ENCODE measurements at regions of chr14 and their contacts with region 1.

Region 1: DNA sequence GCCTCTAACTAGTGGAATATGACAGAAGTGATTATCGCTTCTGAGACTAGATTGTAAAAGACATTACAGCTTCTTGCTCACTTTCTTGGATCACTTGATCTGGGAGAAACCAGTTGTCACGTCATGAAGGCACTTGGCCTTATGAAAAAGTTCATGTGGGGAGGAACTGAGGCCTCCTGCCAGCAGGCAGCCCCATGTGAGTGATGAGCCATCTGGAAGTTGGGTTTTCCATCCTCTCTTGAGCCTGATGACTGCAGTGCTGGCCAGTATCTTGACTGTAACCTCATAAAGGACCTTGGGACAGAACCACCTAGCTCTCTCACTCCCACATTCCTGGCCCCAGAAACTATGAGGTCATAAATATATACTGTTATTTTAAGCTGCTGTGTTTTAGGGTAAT is 28.0 kb downstream of the TTLL5 start:
- DNase-seq: peak; percentile 65 to 77
- ATAC-seq: peak in 2 of 4 donors; percentile 31 to 52
- H3K4me3 ChIP-seq: no peak overlapping the region
- H3K27ac ChIP-seq: no peak overlapping the region
- H3K4me1 ChIP-seq: no peaks in the 10 kb centered on the region
- H3K27me3 ChIP-seq: no peaks in the 10 kb centered on the region
- CTCF ChIP-seq: no peak

Region 2: DNA sequence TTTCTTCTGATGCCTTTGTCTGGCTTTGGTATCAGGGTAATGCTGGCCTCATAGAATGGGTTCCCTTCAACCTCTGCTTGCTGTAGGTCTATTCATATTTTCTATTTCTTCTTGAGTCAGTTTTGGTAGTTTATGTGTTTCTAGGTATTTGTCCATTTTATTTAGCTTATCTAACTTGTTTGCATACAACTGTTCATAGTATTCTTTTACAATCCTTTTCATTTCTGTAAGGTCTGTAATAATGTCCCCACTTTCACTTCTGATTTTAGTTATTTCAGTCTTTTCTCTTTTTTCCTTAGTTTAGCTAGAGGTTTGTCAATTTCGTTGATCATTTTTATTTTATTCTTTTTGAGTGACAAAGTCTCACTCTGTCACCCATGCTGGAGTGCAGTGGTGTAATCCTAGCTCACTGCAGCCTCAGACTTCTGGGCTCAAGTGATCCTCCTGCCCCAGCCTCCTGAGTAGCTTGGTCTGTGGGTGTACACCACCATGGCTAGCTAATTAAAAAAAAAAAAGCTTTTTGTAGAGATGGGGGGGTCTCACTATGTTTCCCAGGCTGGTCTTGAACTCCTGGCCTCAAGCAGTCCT is 16.3 kb before region 1 on chr14:
- intact Hi-C with region 1: loop called in 1 of 2 experiments (anchors 1 kb)
- DNase-seq: no peak
- ATAC-seq: no peak
- H3K4me3 ChIP-seq: no peak overlapping the region
- H3K27ac ChIP-seq: no peak overlapping the region
- H3K4me1 ChIP-seq: no peaks in the 10 kb centered on the region
- H3K27me3 ChIP-seq: no peaks in the 10 kb centered on the region
- CTCF ChIP-seq: no peak